Tibial artery (tissue), 4 donors: ENCODE measurements at regions of chr14 and their contacts with region 1.

Region 1: GRCh38 chr14:75982266-75983018 is 647 bp upstream of the TGFB3 start:
- DNase-seq: peak; percentile 83 to 91
- H3K4me3 ChIP-seq: peak overlapping the region; percentile 68 to 76
- H3K27ac ChIP-seq: peak overlapping the region; percentile 93 to 99
- H3K4me1 ChIP-seq: peaks cover 0 to 64% (median 52%) of the 10 kb centered on the region in 4 donors
- H3K27me3 ChIP-seq: no peaks in the 10 kb centered on the region
- CTCF ChIP-seq: peak; percentile 50 to 73

Region 2: GRCh38 chr14:75660630-75661494 is 321.6 kb before region 1 on chr14 and contains the starts of genes ERG28 and TTLL5:
- intact Hi-C with region 1: loop called (anchors 5 kb)
- DNase-seq: peak; percentile 96 to 99
- H3K4me3 ChIP-seq: peak within 1 kb of the TSS; percentile 89 to 90
- H3K27ac ChIP-seq: peak within 1 kb of the TSS; percentile 81 to 86
- H3K4me1 ChIP-seq: peaks cover 0 to 21% (median 12%) of the 10 kb centered on the region in 4 donors
- H3K27me3 ChIP-seq: no peaks in the 10 kb centered on the region
- CTCF ChIP-seq: no peak

Region 3: GRCh38 chr14:75709207-75709812 is 273.1 kb before region 1 on chr14:
- intact Hi-C with region 1: loop called (anchors 2 kb)
- DNase-seq: peak; percentile 80 to 82
- H3K4me3 ChIP-seq: no peak overlapping the region
- H3K27ac ChIP-seq: no peak overlapping the region
- H3K4me1 ChIP-seq: peaks cover 0 to 15% (median 11%) of the 10 kb centered on the region in 4 donors
- H3K27me3 ChIP-seq: no peaks in the 10 kb centered on the region
- CTCF ChIP-seq: peak; percentile 77 to 81

Region 4: GRCh38 chr14:75906676-75907280 is 75.7 kb before region 1 on chr14:
- intact Hi-C with region 1: loop called (anchors 2 kb)
- DNase-seq: peak in 1 of 2 donors; percentile 67
- H3K4me3 ChIP-seq: no peak overlapping the region
- H3K27ac ChIP-seq: no peak overlapping the region
- H3K4me1 ChIP-seq: no peaks in the 10 kb centered on the region
- H3K27me3 ChIP-seq: no peaks in the 10 kb centered on the region
- CTCF ChIP-seq: peak; percentile 81 to 87

Region 5: GRCh38 chr14:76012354-76012753 is 29.9 kb after region 1 on chr14:
- intact Hi-C with region 1: loop called (anchors 5 kb)
- DNase-seq: peak; percentile 31 to 86
- H3K4me3 ChIP-seq: peak overlapping the region in 1 of 2 donors; percentile 18
- H3K27ac ChIP-seq: peak overlapping the region; percentile 80 to 82
- H3K4me1 ChIP-seq: peaks cover 0 to 24% (median 12%) of the 10 kb centered on the region in 4 donors
- H3K27me3 ChIP-seq: no peaks in the 10 kb centered on the region
- CTCF ChIP-seq: peak; percentile 17 to 41

Region 6: DNA sequence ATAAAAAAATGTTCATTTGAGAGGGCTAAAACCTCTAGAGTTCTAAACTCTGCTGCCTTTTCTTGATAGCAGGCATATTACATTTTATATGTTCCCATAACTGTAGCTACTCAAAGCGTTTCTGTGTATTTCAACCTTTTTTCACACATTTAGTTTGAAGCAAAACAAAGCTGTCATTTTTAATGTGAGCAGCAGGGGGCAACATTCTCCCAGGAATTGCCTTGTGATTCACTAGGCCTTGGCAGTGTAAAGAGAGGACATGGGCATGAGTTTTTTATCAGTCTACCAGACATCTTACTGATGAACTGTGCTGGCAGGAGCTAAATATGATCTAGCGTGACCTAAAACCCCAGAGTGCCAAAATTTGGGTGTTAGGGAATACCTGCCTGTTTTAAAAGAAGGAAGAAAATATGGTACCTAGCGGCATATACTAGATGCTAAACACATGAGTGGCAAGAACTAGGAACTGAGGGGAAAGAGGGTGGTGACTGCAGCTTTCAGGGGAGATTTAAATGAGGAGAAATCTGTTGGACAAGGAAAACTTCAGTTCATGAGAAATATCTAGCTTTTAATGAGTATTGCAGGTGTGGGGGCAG is 68.5 kb after region 1 on chr14:
- intact Hi-C with region 1: no loop called
- DNase-seq: peak in 1 of 2 donors; percentile 43
- H3K4me3 ChIP-seq: no peak overlapping the region
- H3K27ac ChIP-seq: no peak overlapping the region
- H3K4me1 ChIP-seq: no peaks in the 10 kb centered on the region
- H3K27me3 ChIP-seq: no peaks in the 10 kb centered on the region
- CTCF ChIP-seq: peak; percentile 60 to 80

Region 7: GRCh38 chr14:76261371-76261811 is 278.9 kb after region 1 on chr14:
- intact Hi-C with region 1: no loop called
- DNase-seq: no peak
- H3K4me3 ChIP-seq: no peak overlapping the region
- H3K27ac ChIP-seq: no peak overlapping the region
- H3K4me1 ChIP-seq: peaks cover 0 to 19% (median 5%) of the 10 kb centered on the region in 4 donors
- H3K27me3 ChIP-seq: peaks cover 0 to 12% of the 10 kb centered on the region in 2 donors
- CTCF ChIP-seq: no peak